WTC11 (cell line): ENCODE measurements at regions of chr2 and their contacts with region 1.

Region 1: GRCh38 chr2:58856100-58856499 is 615.0 kb upstream of the FANCL start:
- DNase-seq: no peak
- ATAC-seq: peak; percentile 90
- H3K4me3 Mint-ChIP-seq: no peak overlapping the region
- H3K27ac Mint-ChIP-seq: 0 out of 2 replicates have a peak overlapping the region, but pooled peaks have one; percentile 54
- H3K4me1 Mint-ChIP-seq: peaks cover 27% of the 10 kb centered on the region
- H3K27me3 Mint-ChIP-seq: no peaks in the 10 kb centered on the region
- CTCF ChIP-seq: no peak

Region 2: GRCh38 chr2:58871469-58872142 is 15.5 kb after region 1 on chr2:
- CTCF ChIA-PET with region 1: interaction called, 10 read pairs
- POLR2A ChIA-PET with region 1: interaction called, 3 read pairs
- DNase-seq: no peak
- ATAC-seq: peak; percentile 61; the same call in 1 of the 2 replicates
- H3K4me3 Mint-ChIP-seq: no peak overlapping the region
- H3K27ac Mint-ChIP-seq: peak overlapping the region; percentile 17; the same call in 1 of the 2 replicates
- H3K4me1 Mint-ChIP-seq: peaks cover 42% of the 10 kb centered on the region
- H3K27me3 Mint-ChIP-seq: peaks cover 9% of the 10 kb centered on the region
- CTCF ChIP-seq: peak; percentile 70

Region 3: DNA sequence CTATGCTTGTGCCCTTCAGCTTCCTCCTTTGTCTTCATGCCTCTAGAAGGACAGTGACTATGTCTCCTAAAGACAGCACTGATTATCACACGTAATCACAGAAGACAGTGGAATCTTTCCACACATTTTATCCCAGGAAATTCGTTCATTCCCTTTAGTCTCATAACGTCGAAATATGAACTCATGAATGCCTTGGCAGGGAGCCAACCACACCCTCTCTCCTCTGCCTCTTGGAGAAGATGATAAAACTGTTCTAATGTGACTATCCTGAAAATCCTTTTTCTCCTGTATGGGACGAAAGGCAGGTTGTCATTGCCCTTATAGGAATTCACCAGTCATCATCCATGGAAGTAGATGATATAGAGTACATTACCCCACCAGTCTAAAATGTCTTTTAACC is 111.6 kb after region 1 on chr2:
- CTCF ChIA-PET with region 1: no interaction called
- POLR2A ChIA-PET with region 1: no interaction called
- DNase-seq: no peak
- ATAC-seq: no peak
- H3K4me3 Mint-ChIP-seq: no peak overlapping the region
- H3K27ac Mint-ChIP-seq: no peak overlapping the region
- H3K4me1 Mint-ChIP-seq: peaks cover 15% of the 10 kb centered on the region
- H3K27me3 Mint-ChIP-seq: no peaks in the 10 kb centered on the region
- CTCF ChIP-seq: no peak

Region 4: GRCh38 chr2:59083075-59083828 is 227.2 kb after region 1 on chr2:
- CTCF ChIA-PET with region 1: no interaction called
- POLR2A ChIA-PET with region 1: no interaction called
- DNase-seq: no peak
- ATAC-seq: peak; percentile 61
- H3K4me3 Mint-ChIP-seq: no peak overlapping the region
- H3K27ac Mint-ChIP-seq: no peak overlapping the region
- H3K4me1 Mint-ChIP-seq: peaks cover 7% of the 10 kb centered on the region
- H3K27me3 Mint-ChIP-seq: no peaks in the 10 kb centered on the region
- CTCF ChIP-seq: no peak

Region 5: DNA sequence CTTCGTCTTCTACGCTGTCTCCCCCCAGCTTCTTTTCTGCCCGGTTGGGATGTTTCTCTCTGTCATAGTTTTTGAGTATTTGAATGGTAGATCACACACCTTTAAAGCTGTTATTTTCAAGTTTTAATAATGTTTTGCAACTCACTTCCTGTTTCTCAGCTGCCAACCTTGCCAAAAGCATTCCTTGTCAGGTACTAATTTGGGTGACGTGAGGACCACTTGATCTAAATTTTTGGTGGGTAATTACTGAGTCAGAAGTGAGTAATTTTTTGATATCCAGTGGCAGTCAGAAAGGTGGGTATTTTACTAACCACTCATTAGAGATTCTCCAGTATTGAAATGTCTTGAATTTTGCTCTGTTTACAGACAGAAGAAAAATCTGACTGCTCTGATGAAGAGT is 237.5 kb after region 1 on chr2:
- CTCF ChIA-PET with region 1: no interaction called
- POLR2A ChIA-PET with region 1: no interaction called
- DNase-seq: no peak
- ATAC-seq: no peak
- H3K4me3 Mint-ChIP-seq: no peak overlapping the region
- H3K27ac Mint-ChIP-seq: no peak overlapping the region
- H3K4me1 Mint-ChIP-seq: no peaks in the 10 kb centered on the region
- H3K27me3 Mint-ChIP-seq: peaks cover 3% of the 10 kb centered on the region
- CTCF ChIP-seq: no peak